ENCODE measurements at regions of chr11 and their contacts with region 1.

Region 1: GRCh38 chr11:8090756-8091155 is 9.7 kb downstream of the TUB start:
- DNase-seq: no peak
- H3K4me3 ChIP-seq: no peak overlapping the region
- H3K27ac ChIP-seq: no peak overlapping the region
- H3K4me1 ChIP-seq: peaks cover 41% of the 10 kb centered on the region
- H3K27me3 ChIP-seq: no peaks in the 10 kb centered on the region
- CTCF ChIP-seq: peak; percentile 69

Region 2: DNA sequence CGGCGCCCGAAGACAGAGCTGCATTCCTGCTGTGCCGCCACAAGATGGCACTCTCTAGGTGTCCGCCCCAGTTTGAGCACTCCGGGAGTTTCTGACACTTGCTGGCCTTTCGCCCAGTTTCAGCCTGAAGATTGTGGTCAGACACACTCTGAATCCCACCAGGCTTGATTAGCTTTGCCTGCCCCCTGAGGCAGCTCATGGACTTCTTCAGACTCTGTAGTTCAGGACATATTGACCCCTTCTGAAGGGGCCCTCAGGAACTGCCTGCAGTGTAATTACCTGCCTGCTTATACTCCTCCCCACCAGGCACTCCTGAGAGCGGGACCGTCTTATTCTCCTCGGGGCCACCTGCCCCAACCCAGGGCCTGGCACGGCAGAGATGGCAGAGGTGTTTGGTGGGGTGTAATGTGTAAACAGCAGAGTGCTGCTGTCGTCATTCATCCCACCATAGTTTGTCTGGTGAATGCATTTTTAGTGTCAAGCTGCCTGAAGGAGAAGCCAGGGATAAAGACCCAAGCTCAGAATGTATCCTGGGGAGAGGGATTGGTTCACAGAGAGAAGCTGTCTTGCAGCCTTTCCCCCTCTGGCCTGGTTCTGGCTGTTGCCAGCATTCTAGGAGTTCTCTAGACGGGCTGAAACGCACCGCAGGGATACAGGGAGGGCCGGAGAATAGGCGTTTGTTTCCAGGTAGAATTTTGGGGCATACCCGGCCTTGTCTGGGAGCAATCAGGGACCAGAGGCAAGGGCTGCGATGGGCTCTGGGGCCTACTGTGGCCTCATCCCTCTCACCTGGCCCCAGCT is 57.3 kb before region 1 on chr11:
- intact Hi-C with region 1: loop called (anchors 2 kb)
- DNase-seq: peak; percentile 78
- H3K4me3 ChIP-seq: no peak overlapping the region
- H3K27ac ChIP-seq: peak overlapping the region; percentile 43
- H3K4me1 ChIP-seq: peaks cover 60% of the 10 kb centered on the region
- H3K27me3 ChIP-seq: peaks cover 17% of the 10 kb centered on the region
- CTCF ChIP-seq: peak; percentile 93

Measured in left ventricle myocardium inferior (tissue), 1 donor.